Vagina (tissue), 2 donors: ENCODE measurements at regions of chr13 and their contacts with region 1.

Region 1: DNA sequence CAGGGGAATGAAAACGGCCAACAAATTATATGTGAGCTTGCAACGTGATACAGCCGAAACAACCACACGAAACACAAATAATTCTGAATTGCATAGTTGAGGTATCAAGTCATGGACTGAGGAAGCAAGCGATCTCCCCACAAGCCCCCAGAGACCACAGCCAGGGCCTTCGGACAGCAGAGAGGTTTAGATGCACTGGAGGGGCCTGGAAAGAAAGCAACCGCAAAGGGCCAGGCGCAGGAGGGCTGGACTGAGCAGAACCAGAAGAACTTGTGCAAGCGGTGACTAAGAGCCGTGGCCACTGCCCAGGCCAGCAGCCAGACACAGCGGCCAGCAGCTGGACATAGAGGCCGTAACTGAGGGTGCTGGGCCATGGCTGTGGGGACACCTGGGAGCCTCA is 131.4 kb downstream of the TNFRSF19 start:
- DNase-seq: peak in 1 of 2 donors; percentile 96
- H3K4me3 ChIP-seq: no peak overlapping the region
- H3K27ac ChIP-seq: peak overlapping the region; percentile 78
- H3K4me1 ChIP-seq: peaks cover 15% of the 10 kb centered on the region
- H3K27me3 ChIP-seq: no peaks in the 10 kb centered on the region
- CTCF ChIP-seq: no peak
- POLR2A ChIP-seq: no peak

Region 2: DNA sequence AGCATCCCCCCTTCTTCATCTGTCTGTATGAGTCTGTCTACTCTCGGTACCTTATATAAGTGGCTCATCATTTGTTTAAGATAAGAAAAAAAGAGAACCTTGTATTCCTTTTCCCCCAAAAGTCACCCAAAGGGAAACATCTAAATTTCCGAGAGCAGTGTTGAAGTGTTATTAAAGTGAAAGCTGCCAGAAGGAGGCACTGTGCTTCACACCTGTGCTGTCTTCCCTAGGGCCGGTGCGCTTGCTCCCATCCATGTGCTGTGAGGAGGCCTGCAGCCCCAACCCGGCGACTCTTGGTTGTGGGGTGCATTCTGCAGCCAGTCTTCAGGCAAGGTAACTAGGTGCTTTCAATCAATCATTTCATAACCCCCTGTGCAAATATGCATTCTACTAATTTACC is 33.9 kb before region 1 on chr13:
- intact Hi-C with region 1: loop called (anchors 2 kb)
- DNase-seq: no peak
- H3K4me3 ChIP-seq: no peak overlapping the region
- H3K27ac ChIP-seq: no peak overlapping the region
- H3K4me1 ChIP-seq: no peaks in the 10 kb centered on the region
- H3K27me3 ChIP-seq: no peaks in the 10 kb centered on the region
- CTCF ChIP-seq: no peak
- POLR2A ChIP-seq: no peak

Region 3: GRCh38 chr13:23679220-23679619 is 22.4 kb before region 1 on chr13:
- intact Hi-C with region 1: no loop called
- DNase-seq: no peak
- H3K4me3 ChIP-seq: no peak overlapping the region
- H3K27ac ChIP-seq: no peak overlapping the region
- H3K4me1 ChIP-seq: no peaks in the 10 kb centered on the region
- H3K27me3 ChIP-seq: no peaks in the 10 kb centered on the region
- CTCF ChIP-seq: no peak
- POLR2A ChIP-seq: no peak

Region 4: DNA sequence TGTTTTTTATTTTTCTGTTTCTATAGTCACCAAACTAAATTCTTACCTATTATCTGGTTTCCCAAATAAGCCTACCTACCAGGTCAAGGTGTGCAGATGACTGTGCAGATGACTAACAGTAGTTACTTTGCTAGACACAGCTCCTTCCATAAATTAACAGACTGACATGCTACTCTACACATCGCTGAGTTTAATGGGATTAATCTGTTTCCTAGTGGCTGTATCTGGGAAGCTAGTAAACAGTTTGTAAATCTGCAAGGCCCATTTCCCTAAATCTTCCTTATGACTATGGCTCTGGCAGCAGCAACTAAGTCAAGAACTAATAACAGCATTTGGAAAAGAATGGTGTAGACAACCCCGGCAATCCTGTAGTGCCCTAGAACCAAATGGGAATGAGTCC is 159.7 kb after region 1 on chr13:
- intact Hi-C with region 1: loop called (anchors 5 kb)
- DNase-seq: no peak
- H3K4me3 ChIP-seq: no peak overlapping the region
- H3K27ac ChIP-seq: no peak overlapping the region
- H3K4me1 ChIP-seq: no peaks in the 10 kb centered on the region
- H3K27me3 ChIP-seq: no peaks in the 10 kb centered on the region
- CTCF ChIP-seq: no peak
- POLR2A ChIP-seq: no peak

Region 5: GRCh38 chr13:23992781-23993679 is 291.4 kb after region 1 on chr13:
- intact Hi-C with region 1: no loop called
- DNase-seq: peak in 1 of 2 donors; percentile 40
- H3K4me3 ChIP-seq: no peak overlapping the region
- H3K27ac ChIP-seq: no peak overlapping the region
- H3K4me1 ChIP-seq: no peaks in the 10 kb centered on the region
- H3K27me3 ChIP-seq: no peaks in the 10 kb centered on the region
- CTCF ChIP-seq: no peak
- POLR2A ChIP-seq: no peak